ENCODE measurements at regions of chr1 and their contacts with region 1.

Region 1: GRCh38 chr1:46223472-46223943 is 20.4 kb downstream of the LURAP1 start:
- DNase-seq: peak in 1 of 2 donors; percentile 87
- H3K4me3 ChIP-seq: no peak overlapping the region
- H3K27ac ChIP-seq: peak overlapping the region in 1 of 2 donors; percentile 15
- H3K4me1 ChIP-seq: peaks cover 0 to 5% of the 10 kb centered on the region in 2 donors
- H3K27me3 ChIP-seq: no peaks in the 10 kb centered on the region
- CTCF ChIP-seq: peak; percentile 79 to 93 (median 91)

Region 2: GRCh38 chr1:44907893-44908292 is 1315.6 kb before region 1 on chr1:
- intact Hi-C with region 1: no loop called
- DNase-seq: no peak
- H3K4me3 ChIP-seq: no peak overlapping the region
- H3K27ac ChIP-seq: peak overlapping the region; percentile 15 to 41
- H3K4me1 ChIP-seq: peaks cover 3 to 21% of the 10 kb centered on the region in 2 donors
- H3K27me3 ChIP-seq: no peaks in the 10 kb centered on the region
- CTCF ChIP-seq: no peak

Region 3: GRCh38 chr1:45172024-45172423 is 1051.5 kb before region 1 on chr1:
- intact Hi-C with region 1: no loop called
- DNase-seq: no peak
- H3K4me3 ChIP-seq: no peak overlapping the region
- H3K27ac ChIP-seq: no peak overlapping the region
- H3K4me1 ChIP-seq: no peaks in the 10 kb centered on the region
- H3K27me3 ChIP-seq: no peaks in the 10 kb centered on the region
- CTCF ChIP-seq: no peak

Region 4: GRCh38 chr1:46036894-46037839 is 186.3 kb before region 1 on chr1:
- intact Hi-C with region 1: loop called (anchors 1 kb)
- DNase-seq: peak; percentile 33 to 93
- H3K4me3 ChIP-seq: no peak overlapping the region
- H3K27ac ChIP-seq: no peak overlapping the region
- H3K4me1 ChIP-seq: no peaks in the 10 kb centered on the region
- H3K27me3 ChIP-seq: no peaks in the 10 kb centered on the region
- CTCF ChIP-seq: peak; percentile 96 to 97 (median 96)

Region 5: GRCh38 chr1:46188295-46189030 is 35.0 kb before region 1 on chr1:
- intact Hi-C with region 1: no loop called
- DNase-seq: no peak
- H3K4me3 ChIP-seq: no peak overlapping the region
- H3K27ac ChIP-seq: peak overlapping the region; percentile 23 to 46
- H3K4me1 ChIP-seq: peaks cover 3 to 7% of the 10 kb centered on the region in 2 donors
- H3K27me3 ChIP-seq: no peaks in the 10 kb centered on the region
- CTCF ChIP-seq: no peak

Region 6: DNA sequence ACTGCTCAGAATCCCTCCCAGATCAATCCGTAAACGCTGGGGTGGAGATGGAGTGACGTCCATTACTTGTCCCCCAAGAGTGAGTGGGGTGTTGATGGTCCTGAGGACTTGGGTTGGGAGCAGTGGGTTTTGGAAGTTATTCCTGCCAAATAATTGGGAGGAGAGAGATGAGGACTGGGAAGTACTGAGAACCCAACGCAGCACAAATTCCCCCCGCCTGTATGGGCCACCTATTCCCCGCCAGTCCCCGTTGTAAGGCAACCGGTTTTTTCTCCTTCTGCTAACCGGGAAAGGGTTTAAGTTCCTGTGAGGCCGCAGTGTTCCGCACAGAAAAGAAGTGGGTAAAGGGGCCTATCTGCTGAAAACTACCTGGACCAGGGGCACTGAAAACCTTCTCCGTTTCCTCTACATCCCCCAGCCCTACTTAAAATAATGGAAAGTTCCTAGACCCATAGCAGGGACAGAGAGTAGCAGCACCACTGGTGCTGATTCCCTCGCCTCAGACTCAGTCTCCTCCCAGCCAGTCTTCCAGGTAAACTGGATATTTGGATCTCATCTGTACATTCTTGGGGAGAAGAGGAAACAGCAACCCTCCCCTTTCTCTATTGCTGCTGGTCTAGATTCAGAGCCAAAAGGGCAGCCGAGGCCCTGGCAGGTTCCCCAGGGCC is 19.6 kb before region 1 on chr1:
- intact Hi-C with region 1: loop called (anchors 2 kb)
- DNase-seq: no peak
- H3K4me3 ChIP-seq: peak overlapping the region; percentile 83 to 87
- H3K27ac ChIP-seq: peak overlapping the region; percentile 90 to 95
- H3K4me1 ChIP-seq: peaks cover 1 to 18% of the 10 kb centered on the region in 2 donors
- H3K27me3 ChIP-seq: no peaks in the 10 kb centered on the region
- CTCF ChIP-seq: no peak

Measured in ascending aorta (tissue), 2 donors.